Prostate gland (tissue), 2 donors: ENCODE measurements at regions of chr6 and their contacts with region 1.

Region 1: GRCh38 chr6:69835414-69836179 is 30.8 kb upstream of the COL19A1 start:
- DNase-seq: peak; percentile 16
- H3K4me3 ChIP-seq: no peak overlapping the region
- H3K27ac ChIP-seq: no peak overlapping the region
- H3K4me1 ChIP-seq: no peaks in the 10 kb centered on the region
- H3K27me3 ChIP-seq: no peaks in the 10 kb centered on the region
- CTCF ChIP-seq: peak; percentile 10 to 73 (median 48)
- POLR2A ChIP-seq: no peak

Region 2: GRCh38 chr6:70166088-70166958 is 330.7 kb after region 1 on chr6:
- intact Hi-C with region 1: loop called (anchors 10 kb)
- DNase-seq: peak; percentile 6
- H3K4me3 ChIP-seq: no peak overlapping the region
- H3K27ac ChIP-seq: no peak overlapping the region
- H3K4me1 ChIP-seq: no peaks in the 10 kb centered on the region
- H3K27me3 ChIP-seq: no peaks in the 10 kb centered on the region
- CTCF ChIP-seq: peak in 3 of 4 experiments; percentile 11 to 22 (median 12)
- POLR2A ChIP-seq: no peak